Sigmoid colon (tissue), 7 donors: ENCODE measurements at regions of chr2 and their contacts with region 1.

Region 1: DNA sequence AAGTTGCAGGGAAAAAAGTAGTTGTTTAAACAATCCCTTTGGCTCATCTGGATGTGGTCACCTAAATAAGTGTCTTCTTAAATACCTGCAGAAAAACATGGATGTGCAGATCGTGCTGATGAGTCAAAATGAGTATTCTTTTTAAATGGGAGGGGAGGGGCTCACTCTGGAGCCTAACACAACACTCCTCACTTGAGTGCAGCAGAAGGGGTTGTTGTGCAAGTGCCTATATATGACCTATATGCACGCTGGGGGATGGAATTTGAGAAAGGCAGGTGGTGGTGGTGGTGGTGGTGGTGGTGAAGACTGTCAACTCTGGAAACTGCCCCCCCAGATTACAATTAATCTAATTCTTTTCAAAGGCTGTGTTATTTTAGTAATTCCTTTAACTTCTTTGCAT is 77.9 kb upstream of the FAM124B start:
- DNase-seq: no peak
- H3K4me3 ChIP-seq: no peak overlapping the region
- H3K27ac ChIP-seq: no peak overlapping the region
- H3K4me1 ChIP-seq: peaks cover 0 to 19% (median 6%) of the 10 kb centered on the region in 4 donors
- H3K27me3 ChIP-seq: no peaks in the 10 kb centered on the region
- CTCF ChIP-seq: no peak
- EP300 ChIP-seq: no peak
- POLR2A ChIP-seq: no peak

Region 2: DNA sequence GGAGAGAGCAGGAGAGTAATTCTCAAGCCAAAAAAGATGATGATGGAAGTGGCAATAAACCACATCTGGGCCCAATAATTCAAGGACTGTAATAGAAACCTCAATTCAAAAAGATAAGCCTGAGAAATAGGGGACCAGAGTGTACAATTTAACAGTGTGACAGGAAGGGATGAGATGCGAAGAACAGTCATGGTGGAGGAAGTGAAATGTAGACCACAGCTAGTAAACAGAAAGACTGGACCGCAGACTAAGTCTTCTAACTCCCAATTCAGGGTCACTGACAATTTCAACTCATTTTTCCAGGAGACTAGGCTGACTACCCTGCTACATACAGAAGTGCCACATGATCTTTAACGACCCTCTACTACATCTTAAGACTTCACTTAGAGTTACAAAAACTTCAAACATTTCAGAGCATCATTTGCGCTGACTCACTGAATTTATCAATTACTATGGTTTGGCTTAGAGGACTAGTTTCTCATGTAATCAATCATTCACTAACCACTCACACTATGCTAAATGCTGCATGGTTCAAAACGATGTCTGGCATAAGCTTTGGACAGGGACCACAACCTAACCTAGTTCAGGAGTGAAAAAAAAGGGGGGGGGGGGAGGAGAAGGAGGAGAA is 96.4 kb after region 1 on chr2:
- intact Hi-C with region 1: loop called (anchors 5 kb)
- DNase-seq: no peak
- H3K4me3 ChIP-seq: no peak overlapping the region
- H3K27ac ChIP-seq: no peak overlapping the region
- H3K4me1 ChIP-seq: peaks cover 0 to 100% (median 82%) of the 10 kb centered on the region in 4 donors
- H3K27me3 ChIP-seq: no peaks in the 10 kb centered on the region
- CTCF ChIP-seq: no peak
- EP300 ChIP-seq: no peak
- POLR2A ChIP-seq: no peak

Region 3: GRCh38 chr2:224802407-224802806 is 322.6 kb after region 1 on chr2:
- intact Hi-C with region 1: no loop called
- DNase-seq: no peak
- H3K4me3 ChIP-seq: no peak overlapping the region
- H3K27ac ChIP-seq: no peak overlapping the region
- H3K4me1 ChIP-seq: no peaks in the 10 kb centered on the region
- H3K27me3 ChIP-seq: no peaks in the 10 kb centered on the region
- CTCF ChIP-seq: no peak
- EP300 ChIP-seq: no peak
- POLR2A ChIP-seq: no peak

Region 4: DNA sequence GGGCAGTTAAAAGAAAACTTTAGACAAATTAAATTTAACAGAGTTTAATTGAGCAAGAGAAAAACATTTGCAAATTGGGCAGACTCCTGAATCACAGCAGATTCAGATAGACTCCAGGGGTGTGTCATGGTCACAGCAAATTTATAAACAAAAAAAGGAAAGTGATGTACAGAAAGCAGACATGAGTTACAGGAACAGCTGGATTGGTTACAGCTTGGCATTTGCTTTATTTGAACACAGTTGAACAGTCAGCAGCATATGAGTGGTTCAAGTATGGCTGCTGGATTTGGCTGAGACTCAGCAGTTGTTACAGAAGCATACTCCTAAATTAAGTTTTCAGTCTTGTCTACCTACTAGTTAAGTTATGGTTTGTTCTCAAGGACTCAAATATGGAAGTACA is 837.4 kb after region 1 on chr2:
- intact Hi-C with region 1: no loop called
- DNase-seq: no peak
- H3K4me3 ChIP-seq: no peak overlapping the region
- H3K27ac ChIP-seq: no peak overlapping the region
- H3K4me1 ChIP-seq: no peaks in the 10 kb centered on the region
- H3K27me3 ChIP-seq: no peaks in the 10 kb centered on the region
- CTCF ChIP-seq: no peak
- EP300 ChIP-seq: no peak
- POLR2A ChIP-seq: no peak